ENCODE measurements at regions of chr1 and their contacts with region 1.

Region 1: DNA sequence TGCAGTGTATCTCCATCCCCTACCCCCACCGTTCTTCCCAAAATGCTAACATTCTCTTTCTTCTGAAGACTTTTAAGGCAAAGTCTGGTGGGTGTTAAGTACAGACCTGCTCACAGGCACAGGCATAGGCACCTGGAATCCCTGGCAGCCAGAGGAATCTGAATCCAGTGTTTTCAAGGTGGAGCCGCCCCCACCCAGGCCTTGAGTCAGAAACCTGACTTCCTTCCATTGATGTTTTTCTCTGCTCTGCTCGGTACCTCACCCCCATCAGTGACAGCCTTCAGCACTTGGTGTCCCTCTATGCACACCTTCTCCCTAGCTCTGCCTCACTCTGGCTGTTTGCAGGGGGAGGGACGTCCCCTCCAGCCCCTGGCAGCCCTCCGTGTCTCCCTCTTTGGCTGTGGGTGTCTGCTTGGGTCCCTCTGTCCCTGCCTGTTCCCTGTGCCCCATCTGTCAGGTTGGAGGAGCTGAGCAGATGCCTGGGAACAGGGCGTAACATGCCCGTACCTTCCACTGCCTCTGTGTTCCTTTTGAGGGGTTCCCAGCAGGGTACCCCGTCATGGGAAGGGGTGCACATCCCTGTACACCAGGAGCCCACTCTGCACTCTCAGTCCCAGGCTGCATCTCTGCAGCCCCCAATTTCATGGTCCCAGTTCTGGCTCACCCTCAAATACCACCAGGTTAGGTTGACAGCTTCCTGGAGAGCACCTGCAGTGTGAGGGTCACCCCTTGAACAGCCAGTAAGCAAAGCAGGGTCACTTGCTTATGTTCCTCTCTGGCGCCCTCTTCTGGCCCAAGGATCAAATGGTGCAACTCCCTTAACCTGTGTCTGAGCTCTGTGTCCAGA is 6.7 kb downstream of the NCDN start:
- H3K4me3 ChIP-seq: no peak overlapping the region
- H3K27ac ChIP-seq: no peak overlapping the region
- H3K4me1 ChIP-seq: no peaks in the 10 kb centered on the region
- CTCF ChIP-seq: peak; percentile 64

Region 2: DNA sequence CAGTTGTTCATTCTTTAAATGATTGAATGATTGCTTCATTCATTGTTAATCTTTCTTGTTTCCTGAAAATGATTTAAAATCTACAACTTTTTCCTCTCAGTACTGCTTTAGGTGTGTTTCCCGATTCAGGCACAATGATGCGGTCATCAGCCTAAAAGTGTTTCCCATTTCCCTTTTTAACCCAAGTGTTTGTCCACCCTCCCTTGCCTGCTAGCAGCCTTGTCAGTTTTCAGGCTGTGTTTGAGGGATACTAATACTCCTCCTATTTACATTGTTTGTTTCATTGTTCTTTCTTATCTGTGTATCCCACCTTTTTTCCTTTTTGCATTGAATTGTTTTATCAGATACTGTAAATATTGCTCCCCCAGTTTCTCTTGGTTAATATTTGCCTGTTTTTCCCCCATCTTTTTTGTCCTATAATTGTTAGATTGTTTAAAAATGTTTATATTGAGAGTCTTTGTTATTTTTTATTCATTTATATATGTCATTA is 138.1 kb before region 1 on chr1:
- CTCF ChIA-PET with region 1: no interaction called
- POLR2A ChIA-PET with region 1: no interaction called
- H3K4me3 ChIP-seq: no peak overlapping the region
- H3K27ac ChIP-seq: no peak overlapping the region
- H3K4me1 ChIP-seq: no peaks in the 10 kb centered on the region
- CTCF ChIP-seq: no peak

Region 3: DNA sequence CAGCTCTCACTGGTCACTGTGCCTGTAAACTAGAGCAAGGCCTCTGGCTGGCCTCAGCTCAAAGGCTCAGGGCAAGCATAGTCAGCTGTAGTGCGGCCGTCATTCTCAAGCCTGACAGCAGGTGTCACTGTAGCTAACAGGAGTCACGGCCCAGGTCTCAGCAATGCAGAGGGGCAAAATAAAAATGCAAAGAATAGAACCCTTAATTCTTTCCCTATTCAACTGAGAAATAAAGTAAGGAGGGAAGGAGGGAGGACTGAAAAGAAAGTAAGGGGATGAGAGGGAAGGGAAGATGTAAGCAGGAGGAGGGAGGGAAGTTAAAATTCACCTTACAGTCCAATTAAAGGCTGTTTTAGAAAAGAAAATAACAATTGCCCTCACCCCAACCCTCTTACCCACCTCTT is 113.1 kb before region 1 on chr1:
- CTCF ChIA-PET with region 1: interaction called, 61 read pairs
- POLR2A ChIA-PET with region 1: interaction called, 3 read pairs
- H3K4me3 ChIP-seq: no peak overlapping the region
- H3K27ac ChIP-seq: no peak overlapping the region
- H3K4me1 ChIP-seq: no peaks in the 10 kb centered on the region
- CTCF ChIP-seq: no peak

Region 4: DNA sequence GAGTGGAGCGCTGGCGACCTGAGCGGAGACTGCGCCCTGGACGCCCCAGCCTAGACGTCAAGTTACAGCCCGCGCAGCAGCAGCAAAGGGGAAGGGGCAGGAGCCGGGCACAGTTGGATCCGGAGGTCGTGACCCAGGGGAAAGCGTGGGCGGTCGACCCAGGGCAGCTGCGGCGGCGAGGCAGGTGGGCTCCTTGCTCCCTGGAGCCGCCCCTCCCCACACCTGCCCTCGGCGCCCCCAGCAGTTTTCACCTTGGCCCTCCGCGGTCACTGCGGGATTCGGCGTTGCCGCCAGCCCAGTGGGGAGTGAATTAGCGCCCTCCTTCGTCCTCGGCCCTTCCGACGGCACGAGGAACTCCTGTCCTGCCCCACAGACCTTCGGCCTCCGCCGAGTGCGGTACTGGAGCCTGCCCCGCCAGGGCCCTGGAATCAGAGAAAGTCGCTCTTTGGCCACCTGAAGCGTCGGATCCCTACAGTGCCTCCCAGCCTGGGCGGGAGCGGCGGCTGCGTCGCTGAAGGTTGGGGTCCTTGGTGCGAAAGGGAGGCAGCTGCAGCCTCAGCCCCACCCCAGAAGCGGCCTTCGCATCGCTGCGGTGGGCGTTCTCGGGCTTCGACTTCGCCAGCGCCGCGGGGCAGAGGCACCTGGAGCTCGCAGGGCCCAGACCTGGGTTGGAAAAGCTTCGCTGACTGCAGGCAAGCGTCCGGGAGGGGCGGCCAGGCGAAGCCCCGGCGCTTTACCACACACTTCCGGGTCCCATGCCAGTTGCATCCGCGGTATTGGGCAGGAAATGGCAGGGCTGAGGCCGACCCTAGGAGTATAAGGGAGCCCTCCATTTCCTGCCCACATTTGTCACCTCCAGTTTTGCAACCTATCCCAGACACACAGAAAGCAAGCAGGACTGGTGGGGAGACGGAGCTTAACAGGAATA is 13.1 kb after region 1 on chr1:
- CTCF ChIA-PET with region 1: interaction called, 17 read pairs
- POLR2A ChIA-PET with region 1: interaction called, 3 read pairs
- H3K4me3 ChIP-seq: no peak overlapping the region
- H3K27ac ChIP-seq: no peak overlapping the region
- H3K4me1 ChIP-seq: no peaks in the 10 kb centered on the region
- CTCF ChIP-seq: no peak

Region 5: GRCh38 chr1:35726450-35727433 is 162.5 kb after region 1 on chr1:
- CTCF ChIA-PET with region 1: interaction called, 83 read pairs
- POLR2A ChIA-PET with region 1: no interaction called
- H3K4me3 ChIP-seq: no peak overlapping the region
- H3K27ac ChIP-seq: 0 out of 2 replicates have a peak overlapping the region, but pooled peaks have one; percentile 11
- H3K4me1 ChIP-seq: no peaks in the 10 kb centered on the region
- CTCF ChIP-seq: peak; percentile 77

Region 6: GRCh38 chr1:35777109-35777508 is 212.8 kb after region 1 on chr1:
- CTCF ChIA-PET with region 1: interaction called, 21 read pairs
- POLR2A ChIA-PET with region 1: interaction called, 4 read pairs
- H3K4me3 ChIP-seq: no peak overlapping the region
- H3K27ac ChIP-seq: no peak overlapping the region
- H3K4me1 ChIP-seq: no peaks in the 10 kb centered on the region
- CTCF ChIP-seq: no peak

Measured in HEK293 (cell line).